Tibial artery (tissue), 4 donors: ENCODE measurements at regions of chr20 and their contacts with region 1.

Region 1: GRCh38 chr20:46174469-46175128 is 56.5 kb downstream of the CD40 start:
- DNase-seq: peak in 1 of 2 donors; percentile 45
- H3K4me3 ChIP-seq: no peak overlapping the region
- H3K27ac ChIP-seq: no peak overlapping the region
- H3K4me1 ChIP-seq: peaks cover 0 to 7% (median 2%) of the 10 kb centered on the region in 4 donors
- H3K27me3 ChIP-seq: peaks cover 4 to 85% of the 10 kb centered on the region in 2 donors
- CTCF ChIP-seq: peak; percentile 43 to 50

Region 2: DNA sequence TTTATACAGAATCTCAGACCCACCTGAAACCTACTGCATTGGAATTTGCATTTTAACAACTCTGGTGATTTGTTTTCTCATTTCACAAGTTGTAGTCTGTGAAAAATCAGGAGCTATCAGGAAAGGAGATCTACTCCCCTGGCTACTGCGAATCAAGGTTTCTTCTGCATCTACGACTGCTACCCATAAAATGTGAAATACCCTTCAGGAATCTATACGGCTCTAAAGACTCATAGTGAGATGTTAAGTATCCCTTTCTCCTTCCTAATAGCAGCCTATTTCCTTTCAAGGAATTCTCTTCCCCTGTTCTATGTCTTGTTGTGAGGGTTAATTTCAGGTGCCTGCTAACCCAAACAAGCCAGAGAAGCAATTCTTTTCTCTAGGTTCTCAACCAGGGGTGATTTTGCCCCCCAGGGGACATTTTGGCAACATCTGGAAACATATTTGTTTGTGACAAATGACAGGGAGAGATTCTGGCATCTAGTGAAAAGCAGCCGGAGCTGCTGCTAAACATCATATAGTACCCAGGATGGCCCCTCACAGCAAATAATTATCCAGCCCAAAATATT is 409.2 kb before region 1 on chr20:
- intact Hi-C with region 1: no loop called
- DNase-seq: no peak
- H3K4me3 ChIP-seq: no peak overlapping the region
- H3K27ac ChIP-seq: no peak overlapping the region
- H3K4me1 ChIP-seq: no peaks in the 10 kb centered on the region
- H3K27me3 ChIP-seq: no peaks in the 10 kb centered on the region
- CTCF ChIP-seq: no peak

Region 3: DNA sequence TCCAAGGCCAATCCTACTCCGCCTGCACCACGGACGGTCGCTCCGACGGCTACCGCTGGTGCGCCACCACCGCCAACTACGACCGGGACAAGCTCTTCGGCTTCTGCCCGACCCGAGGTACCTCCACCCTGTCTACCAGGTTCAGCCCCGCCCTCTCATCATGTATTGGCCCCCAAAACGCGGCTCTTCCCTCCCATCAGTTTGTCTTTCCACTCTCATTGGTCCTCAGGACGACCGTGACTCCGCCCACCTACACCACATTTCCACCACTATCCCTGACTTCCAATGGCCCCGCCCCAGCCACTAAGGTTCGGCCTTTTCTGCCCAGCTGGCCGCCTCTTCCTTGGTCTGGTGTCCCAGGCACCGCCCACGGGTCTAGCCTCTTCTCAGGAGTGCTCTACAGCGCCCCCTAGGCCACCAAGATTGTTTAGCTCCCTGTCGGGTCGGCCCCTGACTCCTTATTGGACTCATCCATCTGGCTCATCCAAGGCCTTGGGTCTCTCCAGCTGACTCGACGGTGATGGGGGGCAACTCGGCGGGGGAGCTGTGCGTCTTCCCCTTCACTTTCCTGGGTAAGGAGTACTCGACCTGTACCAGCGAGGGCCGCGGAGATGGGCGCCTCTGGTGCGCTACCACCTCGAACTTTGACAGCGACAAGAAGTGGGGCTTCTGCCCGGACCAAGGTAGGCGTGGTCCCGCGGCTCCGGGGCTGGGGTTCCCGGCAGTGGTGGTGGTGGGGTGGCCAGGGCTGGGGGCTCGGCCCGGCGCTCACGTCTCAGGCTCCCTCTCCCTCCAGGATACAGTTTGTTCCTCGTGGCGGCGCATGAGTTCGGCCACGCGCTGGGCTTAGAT is 162.7 kb before region 1 on chr20:
- intact Hi-C with region 1: loop called (anchors 2 kb)
- DNase-seq: no peak
- H3K4me3 ChIP-seq: no peak overlapping the region
- H3K27ac ChIP-seq: no peak overlapping the region
- H3K4me1 ChIP-seq: peaks cover 0 to 18% (median 6%) of the 10 kb centered on the region in 4 donors
- H3K27me3 ChIP-seq: peaks cover 3 to 95% of the 10 kb centered on the region in 2 donors
- CTCF ChIP-seq: no peak

Region 4: DNA sequence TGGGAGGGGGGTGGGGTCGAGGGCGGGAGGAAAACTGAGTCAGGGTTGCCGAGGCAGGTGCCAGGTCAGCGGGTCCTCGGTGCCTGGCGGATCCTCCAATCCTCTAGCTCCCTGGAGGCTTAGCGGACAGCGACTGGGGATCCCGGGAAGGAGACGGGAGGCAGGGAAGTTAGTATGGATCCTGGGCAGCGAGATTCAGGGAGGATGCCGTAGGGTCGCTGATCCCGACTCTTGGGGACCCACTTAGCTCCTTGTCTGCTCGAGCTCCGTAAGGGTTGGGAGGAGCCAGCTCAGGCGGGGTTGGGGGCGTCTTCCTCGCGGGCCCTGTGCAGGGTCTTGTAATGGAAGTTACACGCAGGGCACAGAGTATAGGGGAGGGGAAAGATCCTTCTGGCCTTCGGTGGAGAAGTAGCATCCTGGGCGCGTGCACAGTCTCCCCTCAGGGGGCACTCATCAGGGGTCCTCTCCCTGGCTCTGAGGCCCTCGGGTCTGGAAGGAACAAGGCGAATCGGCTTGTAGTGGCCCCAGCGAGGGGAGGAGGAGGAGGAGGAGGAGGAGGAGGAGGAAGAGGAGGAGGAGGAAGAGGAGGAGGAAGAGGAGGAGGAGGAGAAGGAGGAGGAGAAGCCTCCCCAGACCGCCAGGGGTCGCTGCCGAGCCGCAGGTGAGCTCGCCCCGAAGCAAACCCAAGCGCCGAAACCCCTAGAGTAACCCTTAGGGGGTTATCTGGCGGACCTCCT is 152.0 kb before region 1 on chr20:
- intact Hi-C with region 1: loop called (anchors 5 kb)
- DNase-seq: no peak
- H3K4me3 ChIP-seq: no peak overlapping the region
- H3K27ac ChIP-seq: no peak overlapping the region
- H3K4me1 ChIP-seq: peaks cover 0 to 19% (median 15%) of the 10 kb centered on the region in 4 donors
- H3K27me3 ChIP-seq: peaks cover 5 to 95% of the 10 kb centered on the region in 2 donors
- CTCF ChIP-seq: peak; percentile 64 to 65

Region 5: GRCh38 chr20:46117704-46118467 is 56.7 kb before region 1 on chr20 and contains the start of gene CD40:
- intact Hi-C with region 1: loop called (anchors 10 kb)
- DNase-seq: peak; percentile 91 to 92
- H3K4me3 ChIP-seq: peak within 1 kb of the TSS; percentile 54 to 59
- H3K27ac ChIP-seq: peak within 1 kb of the TSS; percentile 80
- H3K4me1 ChIP-seq: peaks cover 0 to 21% (median 8%) of the 10 kb centered on the region in 4 donors
- H3K27me3 ChIP-seq: no peaks in the 10 kb centered on the region
- CTCF ChIP-seq: no peak